MCF 10A (cell line): ENCODE measurements at regions of chr12 and their contacts with region 1.

Region 1: GRCh38 chr12:31589904-31590641 is 863 bp downstream of the DENND5B start:
- DNase-seq: peak; percentile 76
- H3K4me3 Mint-ChIP-seq: peak overlapping the region; percentile 96
- H3K27ac Mint-ChIP-seq: peak overlapping the region; percentile 92
- H3K4me1 Mint-ChIP-seq: peaks cover 36% of the 10 kb centered on the region
- H3K27me3 Mint-ChIP-seq: no peaks in the 10 kb centered on the region
- CTCF ChIP-seq: no peak

Region 2: DNA sequence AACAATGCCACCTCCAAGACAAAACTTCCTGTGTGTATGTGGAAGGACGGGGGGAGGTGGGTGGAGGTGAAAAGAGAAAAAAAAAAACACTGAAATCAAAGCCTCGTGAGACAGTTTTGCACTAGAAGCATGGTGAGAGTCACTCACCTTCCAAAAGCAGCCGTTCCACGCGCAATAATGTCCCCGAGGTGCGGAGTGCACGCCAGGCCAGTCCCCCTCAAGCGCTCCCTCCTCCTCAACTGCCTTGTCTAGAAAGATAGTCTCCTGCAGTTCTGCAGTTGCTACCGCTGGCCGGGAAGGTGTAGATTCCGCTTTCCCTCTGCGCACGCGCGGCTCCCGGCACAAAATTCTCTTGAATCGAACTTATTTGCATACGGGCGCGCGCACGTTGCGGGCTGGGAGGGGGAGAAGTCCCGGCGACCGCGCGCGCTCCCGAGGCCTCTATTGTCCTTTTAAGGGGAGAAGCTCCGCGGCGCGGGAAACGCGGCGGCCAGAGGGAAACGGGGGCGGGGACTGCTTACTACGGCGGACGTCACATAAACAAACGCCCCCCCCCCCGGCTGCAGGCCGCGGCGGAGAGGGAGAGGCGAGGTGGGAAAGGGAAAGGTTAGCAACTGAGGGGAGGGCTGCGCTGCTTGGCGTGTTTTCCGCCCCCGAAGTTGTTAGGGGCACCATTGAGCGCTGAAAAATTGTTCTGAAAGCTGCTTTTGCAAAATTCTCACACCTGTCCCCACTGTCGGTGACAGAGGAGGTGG is 264.0 kb before region 1 on chr12 and contains the start of gene SINHCAF:
- CTCF ChIA-PET with region 1: no interaction called
- POLR2A ChIA-PET with region 1: interaction called, 15 read pairs
- intact Hi-C with region 1: no loop called
- DNase-seq: peak; percentile 100
- H3K4me3 Mint-ChIP-seq: peak within 1 kb of the TSS; percentile 99
- H3K27ac Mint-ChIP-seq: peak within 1 kb of the TSS; percentile 94
- H3K4me1 Mint-ChIP-seq: peaks cover 14% of the 10 kb centered on the region
- H3K27me3 Mint-ChIP-seq: no peaks in the 10 kb centered on the region
- CTCF ChIP-seq: no peak
- total RNA-seq, gene SINHCAF: 100 and 139 TPM in 2 replicates

Region 3: DNA sequence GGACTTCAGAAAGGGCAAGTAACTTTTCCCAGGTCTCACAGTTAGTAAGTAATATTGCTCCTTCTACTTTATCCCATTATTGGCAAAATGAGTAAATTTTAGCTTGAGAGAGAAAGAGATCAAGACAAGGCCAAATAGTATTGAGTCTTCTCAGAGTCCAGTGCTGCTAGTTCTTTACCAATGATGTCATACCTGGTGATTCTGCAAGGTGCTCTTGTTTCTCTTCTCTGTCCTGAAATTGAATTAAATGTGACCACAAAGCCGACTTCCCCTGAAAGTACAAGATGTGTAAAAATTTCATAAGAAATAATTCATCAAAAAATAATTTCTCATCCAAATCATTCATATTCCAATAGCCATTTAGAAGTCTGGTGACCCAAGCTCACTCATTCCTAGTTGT is 166.7 kb before region 1 on chr12:
- CTCF ChIA-PET with region 1: interaction called, 3 read pairs
- POLR2A ChIA-PET with region 1: interaction called, 3 read pairs
- intact Hi-C with region 1: loop called (anchors 5 kb)
- DNase-seq: no peak
- H3K4me3 Mint-ChIP-seq: no peak overlapping the region
- H3K27ac Mint-ChIP-seq: no peak overlapping the region
- H3K4me1 Mint-ChIP-seq: no peaks in the 10 kb centered on the region
- H3K27me3 Mint-ChIP-seq: no peaks in the 10 kb centered on the region
- CTCF ChIP-seq: no peak

Region 4: GRCh38 chr12:31506515-31507306 is 83.4 kb before region 1 on chr12:
- CTCF ChIA-PET with region 1: interaction called, 3 read pairs
- POLR2A ChIA-PET with region 1: interaction called, 43 read pairs
- intact Hi-C with region 1: no loop called
- DNase-seq: no peak
- H3K4me3 Mint-ChIP-seq: no peak overlapping the region
- H3K27ac Mint-ChIP-seq: peak overlapping the region; percentile 21
- H3K4me1 Mint-ChIP-seq: peaks cover 25% of the 10 kb centered on the region
- H3K27me3 Mint-ChIP-seq: no peaks in the 10 kb centered on the region
- CTCF ChIP-seq: no peak

Region 5: DNA sequence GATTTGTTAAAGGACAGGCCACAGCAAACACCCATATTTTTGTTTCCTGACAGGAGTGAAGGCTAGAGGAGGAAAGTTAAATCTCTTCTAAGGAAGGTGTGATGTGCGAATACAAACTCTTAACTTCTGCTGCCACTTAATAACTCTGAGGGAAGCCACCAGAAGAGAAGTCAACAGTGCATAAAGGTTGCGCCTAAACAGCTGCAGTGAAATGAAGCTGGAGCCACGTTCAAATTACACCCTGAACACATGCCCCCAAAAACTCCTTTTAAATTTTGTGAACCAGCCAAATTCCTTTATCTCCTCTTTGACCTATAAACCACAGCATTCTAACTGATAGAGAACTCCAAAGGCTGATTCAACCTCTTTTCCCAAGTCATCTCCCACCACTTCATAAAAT is 21.6 kb before region 1 on chr12:
- CTCF ChIA-PET with region 1: interaction called, 4 read pairs
- POLR2A ChIA-PET with region 1: interaction called, 29 read pairs
- intact Hi-C with region 1: no loop called
- DNase-seq: no peak
- H3K4me3 Mint-ChIP-seq: no peak overlapping the region
- H3K27ac Mint-ChIP-seq: no peak overlapping the region
- H3K4me1 Mint-ChIP-seq: peaks cover 12% of the 10 kb centered on the region
- H3K27me3 Mint-ChIP-seq: no peaks in the 10 kb centered on the region
- CTCF ChIP-seq: no peak